RWPE1 (cell line): ENCODE measurements at regions of chr16 and their contacts with region 1.

Region 1: GRCh38 chr16:96935-97381 is 18.9 kb downstream of the MPG start:
- DNase-seq: peak; percentile 94
- H3K27ac ChIP-seq: peak overlapping the region; percentile 32
- CTCF ChIP-seq: peak; percentile 97

Region 2: GRCh38 chr16:72561-73548 is 24.1 kb before region 1 on chr16 and contains the start of gene RHBDF1:
- CTCF ChIA-PET with region 1: interaction called, 135 read pairs
- POLR2A ChIA-PET with region 1: interaction called, 3 read pairs
- DNase-seq: peak; percentile 74
- H3K27ac ChIP-seq: peak within 1 kb of the TSS; percentile 91
- CTCF ChIP-seq: no peak

Region 3: GRCh38 chr16:77807-78443 is 19.0 kb before region 1 on chr16 and contains the start of gene MPG:
- CTCF ChIA-PET with region 1: interaction called, 10 read pairs
- POLR2A ChIA-PET with region 1: interaction called, 3 read pairs
- DNase-seq: peak; percentile 93
- H3K27ac ChIP-seq: peak within 1 kb of the TSS; percentile 91
- CTCF ChIP-seq: no peak

Region 4: GRCh38 chr16:84718-85406 is 12.1 kb before region 1 on chr16:
- CTCF ChIA-PET with region 1: interaction called, 21 read pairs
- POLR2A ChIA-PET with region 1: interaction called, 4 read pairs
- DNase-seq: peak; percentile 66
- H3K27ac ChIP-seq: peak overlapping the region; percentile 89
- CTCF ChIP-seq: no peak